ENCODE measurements at regions of chr2 and their contacts with region 1.

Region 1: DNA sequence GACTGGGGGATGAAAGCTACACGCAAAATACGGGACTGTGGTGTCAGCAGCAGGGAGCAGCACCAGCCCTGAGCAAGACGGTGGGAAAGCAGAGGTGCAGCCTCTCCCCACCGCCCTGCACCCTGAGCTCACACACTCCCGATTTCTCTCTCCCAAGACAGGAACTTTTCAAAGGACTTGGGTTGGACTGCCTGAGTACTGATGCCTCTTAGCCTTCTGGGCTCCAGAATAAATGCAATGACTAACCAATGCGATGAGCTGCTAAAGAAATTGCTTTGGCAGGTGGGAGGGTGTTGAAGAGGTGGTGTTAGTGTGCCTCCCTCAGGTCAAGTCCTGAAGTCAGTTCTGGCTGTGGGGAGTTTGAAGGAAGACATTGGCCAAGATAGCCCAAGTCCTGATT is 9.6 kb downstream of the TRIM54 start:
- DNase-seq: no peak
- H3K4me3 ChIP-seq: no peak overlapping the region
- H3K27ac ChIP-seq: no peak overlapping the region
- H3K27me3 ChIP-seq: peaks cover 14% of the 10 kb centered on the region
- CTCF ChIP-seq: no peak

Region 2: DNA sequence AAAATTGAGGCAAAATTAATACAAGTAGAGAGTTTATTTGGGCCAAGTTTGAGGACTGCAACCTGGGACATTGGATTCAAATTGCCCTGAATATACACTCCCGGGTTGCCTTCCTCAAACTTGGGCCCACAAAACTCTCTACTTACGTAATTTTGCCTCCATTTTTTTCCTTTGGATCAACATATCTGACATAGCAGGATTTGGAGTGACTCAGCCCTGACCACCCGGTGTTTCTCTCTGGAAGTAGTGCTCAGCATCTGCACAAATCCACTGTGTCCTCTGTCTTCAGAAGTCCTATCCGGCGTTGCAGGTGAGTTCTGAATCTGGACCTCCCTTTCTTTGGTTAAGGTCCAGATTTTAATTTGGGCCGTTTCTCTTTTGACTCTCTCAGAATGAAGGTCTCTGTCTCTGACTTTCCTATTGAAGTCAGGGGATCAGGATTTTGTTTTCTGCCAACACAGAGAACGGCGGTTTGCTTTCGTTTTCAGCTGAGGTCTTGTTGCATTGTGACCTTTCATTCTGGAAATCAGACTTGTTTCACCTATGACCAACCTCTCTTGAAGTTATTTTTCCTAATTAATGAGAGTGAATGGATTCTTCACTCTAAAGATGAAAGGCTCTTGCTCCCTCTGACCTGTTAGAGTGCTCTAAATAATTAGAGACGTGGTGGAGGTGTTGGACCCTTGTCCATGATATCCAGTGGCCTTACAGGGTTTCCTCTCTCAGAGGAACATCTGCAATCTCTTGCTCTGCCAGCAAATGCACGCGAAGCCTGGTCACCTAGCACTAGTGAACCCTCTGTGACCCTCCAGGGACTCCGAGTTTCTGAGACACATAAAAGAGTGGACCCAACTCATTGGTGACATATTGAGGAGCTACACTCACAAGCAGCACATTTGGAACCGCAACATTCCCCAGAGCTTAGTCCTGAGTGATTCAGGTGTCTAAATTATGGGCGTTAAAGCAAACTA is 129.4 kb before region 1 on chr2:
- CTCF ChIA-PET with region 1: no interaction called
- POLR2A ChIA-PET with region 1: interaction called, 15 read pairs
- DNase-seq: peak; percentile 7
- H3K4me3 ChIP-seq: no peak overlapping the region
- H3K27ac ChIP-seq: no peak overlapping the region
- H3K27me3 ChIP-seq: peaks cover 35% of the 10 kb centered on the region
- CTCF ChIP-seq: no peak

Region 3: GRCh38 chr2:27211829-27212627 is 79.8 kb before region 1 on chr2 and contains the starts of genes ATRAID and SLC5A6:
- CTCF ChIA-PET with region 1: no interaction called
- POLR2A ChIA-PET with region 1: interaction called, 13 read pairs
- DNase-seq: peak; percentile 34
- H3K4me3 ChIP-seq: peak within 1 kb of the TSS; percentile 95
- H3K27ac ChIP-seq: peak within 1 kb of the TSS; percentile 97
- H3K27me3 ChIP-seq: no peaks in the 10 kb centered on the region
- CTCF ChIP-seq: no peak
- polyA plus RNA-seq, gene ATRAID: 219 and 233 TPM in 2 replicates
- polyA plus RNA-seq, gene SLC5A6: 22.0 and 23.2 TPM in 2 replicates

Region 4: GRCh38 chr2:27312152-27312551 is 20.3 kb after region 1 on chr2:
- CTCF ChIA-PET with region 1: no interaction called
- POLR2A ChIA-PET with region 1: no interaction called
- DNase-seq: no peak
- H3K4me3 ChIP-seq: no peak overlapping the region
- H3K27ac ChIP-seq: no peak overlapping the region
- H3K27me3 ChIP-seq: peaks cover 14% of the 10 kb centered on the region
- CTCF ChIP-seq: no peak